GM12878 (cell line): ENCODE measurements at regions of chr22 and their contacts with region 1.

Region 1: DNA sequence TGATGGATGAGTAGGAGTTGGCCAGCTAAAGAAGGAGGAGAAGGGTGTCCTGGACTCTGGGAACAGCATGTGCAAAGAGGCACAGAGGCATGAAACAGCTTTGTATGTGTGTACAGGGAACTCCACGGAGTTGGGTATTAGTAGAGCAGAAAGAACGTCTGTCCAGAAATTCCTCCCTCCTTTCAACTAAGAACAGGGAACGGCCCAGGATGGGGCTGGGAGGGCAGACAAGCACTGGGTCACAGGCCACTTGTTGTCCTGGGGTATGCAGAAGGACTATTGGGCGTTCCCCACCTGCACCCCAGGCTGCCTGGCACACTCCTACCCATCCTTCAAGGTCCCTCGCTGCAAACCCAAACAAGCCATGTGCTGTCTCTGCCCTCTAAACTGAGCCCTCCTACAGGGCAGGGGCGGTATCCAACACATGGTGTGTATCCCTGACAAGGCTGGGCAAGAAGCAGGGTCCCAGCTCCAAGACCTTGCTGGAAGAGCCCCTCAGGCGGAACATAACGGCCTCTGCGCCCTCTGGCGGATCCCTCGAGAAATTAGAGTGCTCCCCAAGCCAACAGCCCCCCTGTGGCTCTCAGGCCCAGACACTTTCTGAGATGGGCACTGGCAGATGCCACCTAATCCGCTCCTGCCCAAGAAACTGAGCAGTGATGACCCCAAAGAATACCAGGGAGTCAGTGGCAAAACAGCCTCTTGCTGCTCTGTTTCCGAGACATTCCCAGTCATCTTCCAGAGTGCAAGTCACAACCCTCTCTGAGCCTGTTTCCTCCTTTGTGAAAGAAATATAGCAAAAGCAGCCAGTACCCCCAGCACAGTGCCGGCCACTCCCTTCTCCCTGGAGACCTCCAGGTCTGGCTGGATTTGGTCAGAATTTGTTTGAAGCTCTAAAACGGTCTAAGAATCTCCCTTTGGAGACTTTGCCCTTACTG is 1.6 kb upstream of the ELFN2 start:
- DNase-seq: no peak
- ATAC-seq: peak; percentile 87
- H3K4me3 ChIP-seq: no peak overlapping the region
- H3K27ac ChIP-seq: no peak overlapping the region
- H3K4me1 ChIP-seq: no peaks in the 10 kb centered on the region
- H3K27me3 ChIP-seq: peaks cover 11 to 15% of the 10 kb centered on the region in 2 experiments
- CTCF ChIP-seq: peak; percentile 75 to 81 (median 75)
- EP300 ChIP-seq: no peak
- POLR2A ChIP-seq: no peak
- RAD21 ChIP-seq: peak; percentile 56

Region 2: GRCh38 chr22:37330200-37331033 is 98.5 kb before region 1 on chr22:
- CTCF ChIA-PET with region 1: interaction called, 17 read pairs
- POLR2A ChIA-PET with region 1: no interaction called
- RAD21 ChIA-PET with region 1: interaction called, 5 read pairs
- SMC1A ChIA-PET with region 1: interaction called, 3 read pairs
- in situ Hi-C with region 1: no loop called
- intact Hi-C with region 1: no loop called
- DNase-seq: no peak
- ATAC-seq: peak; percentile 90
- H3K4me3 ChIP-seq: no peak overlapping the region
- H3K27ac ChIP-seq: no peak overlapping the region
- H3K4me1 ChIP-seq: no peaks in the 10 kb centered on the region; the same call in 1 of the 2 replicates
- H3K27me3 ChIP-seq: peaks cover 8 to 9% of the 10 kb centered on the region in 2 experiments
- CTCF ChIP-seq: peak; percentile 24 to 34 (median 26); a peak in 4 of 6 replicates
- EP300 ChIP-seq: no peak
- POLR2A ChIP-seq: no peak
- RAD21 ChIP-seq: no peak

Region 3: GRCh38 chr22:37442537-37442936 is 13.6 kb after region 1 on chr22:
- CTCF ChIA-PET with region 1: interaction called, 5 read pairs
- POLR2A ChIA-PET with region 1: no interaction called
- RAD21 ChIA-PET with region 1: interaction called, 4 read pairs
- SMC1A ChIA-PET with region 1: interaction called, 10 read pairs
- in situ Hi-C with region 1: no loop called
- intact Hi-C with region 1: no loop called
- DNase-seq: no peak
- ATAC-seq: peak; percentile 73
- H3K4me3 ChIP-seq: no peak overlapping the region
- H3K27ac ChIP-seq: no peak overlapping the region
- H3K4me1 ChIP-seq: no peaks in the 10 kb centered on the region
- H3K27me3 ChIP-seq: no peaks in the 10 kb centered on the region; a peak in 3 of 4 replicates
- CTCF ChIP-seq: no peak
- EP300 ChIP-seq: no peak
- POLR2A ChIP-seq: no peak
- RAD21 ChIP-seq: no peak

Region 4: DNA sequence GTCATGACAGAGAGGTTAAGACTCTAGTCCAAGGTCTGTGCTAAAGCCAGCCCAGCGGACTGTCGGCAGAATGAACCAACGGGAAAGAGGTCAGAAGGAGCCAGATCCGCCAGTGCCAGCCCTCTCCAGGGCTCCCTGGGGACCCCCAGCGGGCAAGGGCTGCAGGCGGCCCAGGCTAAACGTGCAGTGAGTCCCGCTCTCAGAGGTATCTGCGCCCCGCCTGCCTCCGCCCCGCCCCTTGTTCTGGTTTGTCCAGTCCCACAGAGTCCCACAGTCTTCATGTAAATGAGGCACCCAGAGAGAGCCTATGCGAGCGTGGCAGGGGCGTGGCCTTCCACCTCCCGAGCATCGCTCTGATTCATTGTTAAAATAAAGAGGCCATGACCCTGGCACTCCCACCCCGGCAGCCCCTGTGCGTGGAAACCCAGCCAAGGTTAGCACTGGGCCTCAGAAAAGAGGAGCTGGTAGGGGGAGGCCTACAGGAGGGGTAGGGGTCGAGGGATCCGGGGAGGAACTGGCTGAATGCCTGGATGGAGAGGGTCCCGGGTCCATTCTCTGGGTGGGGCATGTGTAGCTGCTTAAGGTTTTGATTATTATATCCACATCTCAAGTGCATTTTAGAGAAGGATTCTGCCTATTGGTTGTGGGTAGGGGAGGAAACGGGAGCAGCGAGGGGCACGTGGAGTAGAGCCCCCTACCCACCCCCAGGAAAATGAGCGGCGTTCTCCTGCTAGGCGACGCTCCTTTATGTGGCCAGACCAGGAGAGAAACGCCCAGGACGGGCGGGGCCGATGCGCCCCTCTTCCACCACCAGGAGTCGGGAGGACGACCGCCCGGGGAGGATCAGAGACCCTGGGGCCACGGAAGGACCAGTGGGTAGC is 268.0 kb after region 1 on chr22 and contains the start of gene TRIOBP:
- CTCF ChIA-PET with region 1: no interaction called
- POLR2A ChIA-PET with region 1: no interaction called
- RAD21 ChIA-PET with region 1: no interaction called
- SMC1A ChIA-PET with region 1: no interaction called
- in situ Hi-C with region 1: no loop called
- intact Hi-C with region 1: no loop called
- DNase-seq: peak; percentile 56
- ATAC-seq: peak; percentile 99
- H3K4me3 ChIP-seq: no peak within 1 kb of the TSS
- H3K27ac ChIP-seq: no peak within 1 kb of the TSS
- H3K4me1 ChIP-seq: no peaks in the 10 kb centered on the region; the same call in 1 of the 2 replicates
- H3K27me3 ChIP-seq: no peaks in the 10 kb centered on the region
- CTCF ChIP-seq: peak; percentile 9 to 31 (median 12); a peak in 3 of 6 replicates
- EP300 ChIP-seq: no peak
- POLR2A ChIP-seq: no peak
- RAD21 ChIP-seq: no peak
- polyA plus RNA-seq, gene TRIOBP: 0.21 to 0.53 TPM